ENCODE measurements at regions of chr17 and their contacts with region 1.

Region 1: GRCh38 chr17:16285957-16286640 is 67.2 kb downstream of the CENPV start:
- DNase-seq: peak; percentile 77 to 88 (median 80)
- H3K4me3 ChIP-seq: peak overlapping the region in 1 of 2 donors; percentile 19
- H3K4me3 Mint-ChIP-seq: peak overlapping the region; percentile 70 to 88 (median 81)
- H3K27ac ChIP-seq: peak overlapping the region; percentile 71
- H3K27ac Mint-ChIP-seq: peak overlapping the region; percentile 97 to 99 (median 99)
- H3K4me1 ChIP-seq: peaks cover 53% of the 10 kb centered on the region
- H3K4me1 Mint-ChIP-seq: peaks cover 48 to 68% (median 51%) of the 10 kb centered on the region in 4 donors
- H3K27me3 ChIP-seq: no peaks in the 10 kb centered on the region
- H3K27me3 Mint-ChIP-seq: no peaks in the 10 kb centered on the region

Region 2: GRCh38 chr17:16215273-16215964 is 70.7 kb before region 1 on chr17 and contains the start of gene NCOR1:
- CTCF ChIA-PET with region 1: interaction called, 19 read pairs
- POLR2A ChIA-PET with region 1: interaction called, 53 read pairs
- intact Hi-C with region 1: loop called (anchors 2 kb)
- DNase-seq: peak; percentile 82 to 89 (median 84)
- H3K4me3 ChIP-seq: peak within 1 kb of the TSS; percentile 59 to 80
- H3K4me3 Mint-ChIP-seq: peak within 1 kb of the TSS; percentile 93 to 100 (median 97)
- H3K27ac ChIP-seq: peak within 1 kb of the TSS; percentile 87
- H3K27ac Mint-ChIP-seq: peak within 1 kb of the TSS; percentile 88 to 98 (median 94)
- H3K4me1 ChIP-seq: peaks cover 59% of the 10 kb centered on the region
- H3K4me1 Mint-ChIP-seq: peaks cover 28 to 65% (median 38%) of the 10 kb centered on the region in 4 donors
- H3K27me3 ChIP-seq: no peaks in the 10 kb centered on the region
- H3K27me3 Mint-ChIP-seq: no peaks in the 10 kb centered on the region
- total RNA-seq, gene NCOR1: 156 to 169 TPM

Region 3: GRCh38 chr17:16269658-16270057 is 16.4 kb before region 1 on chr17:
- CTCF ChIA-PET with region 1: interaction called, 7 read pairs
- POLR2A ChIA-PET with region 1: interaction called, 33 read pairs
- intact Hi-C with region 1: no loop called
- DNase-seq: no peak
- H3K4me3 ChIP-seq: no peak overlapping the region
- H3K4me3 Mint-ChIP-seq: peak overlapping the region in 5 of 8 donors; percentile 12 to 40 (median 28)
- H3K27ac ChIP-seq: no peak overlapping the region
- H3K27ac Mint-ChIP-seq: peak overlapping the region in 4 of 7 donors; percentile 42 to 70 (median 47)
- H3K4me1 ChIP-seq: peaks cover 35% of the 10 kb centered on the region
- H3K4me1 Mint-ChIP-seq: peaks cover 20 to 46% (median 31%) of the 10 kb centered on the region in 4 donors
- H3K27me3 ChIP-seq: no peaks in the 10 kb centered on the region
- H3K27me3 Mint-ChIP-seq: no peaks in the 10 kb centered on the region

Region 4: DNA sequence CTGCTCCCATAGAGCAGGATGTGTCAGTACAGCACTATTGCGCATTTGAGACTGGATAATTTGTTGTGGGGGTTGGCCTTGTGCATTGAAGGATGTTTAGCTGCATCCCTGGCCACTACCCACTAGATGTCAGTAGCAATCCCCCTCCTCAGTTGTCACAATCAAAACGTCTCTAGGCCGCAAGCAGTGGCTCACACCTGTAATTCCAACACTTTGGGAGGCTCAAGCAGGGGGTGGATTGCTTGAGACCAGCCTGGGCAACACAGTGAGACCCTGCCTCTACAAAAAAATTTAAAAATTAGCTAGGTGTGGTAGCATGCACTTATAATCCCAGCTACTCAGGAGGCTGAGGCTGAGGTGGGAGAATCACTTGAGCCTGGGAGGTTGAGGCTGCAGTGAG is 18.7 kb after region 1 on chr17:
- CTCF ChIA-PET with region 1: interaction called, 15 read pairs
- POLR2A ChIA-PET with region 1: interaction called, 7 read pairs
- intact Hi-C with region 1: no loop called
- DNase-seq: peak in 1 of 5 donors; percentile 17
- H3K4me3 ChIP-seq: no peak overlapping the region
- H3K4me3 Mint-ChIP-seq: no peak overlapping the region
- H3K27ac ChIP-seq: no peak overlapping the region
- H3K27ac Mint-ChIP-seq: peak overlapping the region in 1 of 7 donors; percentile 24
- H3K4me1 ChIP-seq: no peaks in the 10 kb centered on the region
- H3K4me1 Mint-ChIP-seq: peaks cover 0 to 3% (median 2%) of the 10 kb centered on the region in 4 donors
- H3K27me3 ChIP-seq: no peaks in the 10 kb centered on the region
- H3K27me3 Mint-ChIP-seq: no peaks in the 10 kb centered on the region

Region 5: DNA sequence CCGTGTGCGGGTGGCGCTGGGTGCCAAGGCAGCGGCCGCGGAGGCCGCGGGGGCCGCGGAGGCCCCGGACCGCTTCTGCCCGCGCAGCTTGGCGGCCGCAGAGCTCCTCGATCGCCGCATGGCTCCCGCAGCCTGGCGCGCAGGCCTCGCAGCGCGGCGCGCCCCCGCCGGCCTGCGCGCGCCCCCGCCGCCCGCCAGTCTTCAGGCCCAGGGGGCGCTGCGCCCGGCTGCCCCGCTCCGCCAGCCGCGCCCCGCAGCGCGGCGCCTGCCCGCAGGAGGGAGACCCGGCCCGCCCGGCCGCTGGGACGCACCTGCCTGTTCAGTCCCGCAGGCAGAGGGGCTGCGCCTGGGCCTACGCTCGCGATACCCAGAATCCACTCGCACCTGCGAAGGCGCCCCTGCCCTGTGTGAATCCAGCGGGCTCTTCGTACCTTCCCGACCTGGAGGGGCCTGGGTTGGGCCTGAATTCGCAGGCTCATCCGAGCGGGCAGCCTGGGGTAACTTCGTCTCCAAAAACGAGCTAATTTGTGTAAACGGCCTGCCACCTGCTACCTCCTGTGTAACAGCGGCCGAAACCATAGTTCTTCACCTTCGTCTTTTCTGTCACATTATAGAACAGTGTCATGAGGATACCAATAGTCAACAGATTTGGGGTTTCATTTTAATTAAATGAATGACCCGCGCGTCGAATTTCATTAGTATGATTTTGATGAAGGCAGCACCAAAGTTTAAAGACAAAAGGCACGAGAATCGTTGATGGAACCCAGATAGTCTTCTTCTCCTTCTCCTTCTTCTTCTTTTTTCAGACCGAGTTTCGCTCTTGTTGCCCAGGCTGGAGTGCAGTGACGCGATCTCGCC is 67.4 kb after region 1 on chr17 and contains the start of gene CENPV:
- CTCF ChIA-PET with region 1: interaction called, 7 read pairs
- POLR2A ChIA-PET with region 1: interaction called, 14 read pairs
- intact Hi-C with region 1: loop called (anchors 5 kb)
- DNase-seq: peak; percentile 64 to 71 (median 66)
- H3K4me3 ChIP-seq: peak within 1 kb of the TSS; percentile 44 to 66
- H3K4me3 Mint-ChIP-seq: peak within 1 kb of the TSS; percentile 91 to 97 (median 94)
- H3K27ac ChIP-seq: peak within 1 kb of the TSS; percentile 47
- H3K27ac Mint-ChIP-seq: peak within 1 kb of the TSS; percentile 45 to 91 (median 79)
- H3K4me1 ChIP-seq: peaks cover 12% of the 10 kb centered on the region
- H3K4me1 Mint-ChIP-seq: peaks cover 9 to 17% (median 15%) of the 10 kb centered on the region in 4 donors
- H3K27me3 ChIP-seq: no peaks in the 10 kb centered on the region
- H3K27me3 Mint-ChIP-seq: no peaks in the 10 kb centered on the region
- total RNA-seq, gene CENPV: 8.4 to 8.6 TPM

Region 6: GRCh38 chr17:16438557-16439302 is 152.6 kb after region 1 on chr17:
- CTCF ChIA-PET with region 1: no interaction called
- POLR2A ChIA-PET with region 1: interaction called, 11 read pairs
- intact Hi-C with region 1: no loop called
- DNase-seq: peak; percentile 94 to 97 (median 96)
- H3K4me3 ChIP-seq: peak overlapping the region; percentile 78 to 95
- H3K4me3 Mint-ChIP-seq: peak overlapping the region; percentile 98 to 100 (median 99)
- H3K27ac ChIP-seq: peak overlapping the region; percentile 94
- H3K27ac Mint-ChIP-seq: peak overlapping the region; percentile 96 to 100 (median 99)
- H3K4me1 ChIP-seq: peaks cover 45% of the 10 kb centered on the region
- H3K4me1 Mint-ChIP-seq: peaks cover 32 to 57% (median 43%) of the 10 kb centered on the region in 4 donors
- H3K27me3 ChIP-seq: no peaks in the 10 kb centered on the region
- H3K27me3 Mint-ChIP-seq: no peaks in the 10 kb centered on the region

Measured in CD4-positive, alpha-beta memory T cell (primary cell).